ENCODE measurements at regions of chr2 and their contacts with region 1.

Region 1: GRCh38 chr2:135709992-135710391 is 31.7 kb upstream of the UBXN4 start:
- DNase-seq: peak; percentile 68
- CTCF ChIP-seq: peak; percentile 88

Region 2: GRCh38 chr2:135004005-135004746 is 705.8 kb before region 1 on chr2:
- CTCF ChIA-PET with region 1: interaction called, 133 read pairs
- POLR2A ChIA-PET with region 1: no interaction called
- DNase-seq: peak; percentile 82
- CTCF ChIP-seq: peak; percentile 94

Region 3: GRCh38 chr2:135664623-135665068 is 45.3 kb before region 1 on chr2:
- CTCF ChIA-PET with region 1: interaction called, 19 read pairs
- POLR2A ChIA-PET with region 1: no interaction called
- DNase-seq: peak; percentile 24
- CTCF ChIP-seq: no peak

Region 4: DNA sequence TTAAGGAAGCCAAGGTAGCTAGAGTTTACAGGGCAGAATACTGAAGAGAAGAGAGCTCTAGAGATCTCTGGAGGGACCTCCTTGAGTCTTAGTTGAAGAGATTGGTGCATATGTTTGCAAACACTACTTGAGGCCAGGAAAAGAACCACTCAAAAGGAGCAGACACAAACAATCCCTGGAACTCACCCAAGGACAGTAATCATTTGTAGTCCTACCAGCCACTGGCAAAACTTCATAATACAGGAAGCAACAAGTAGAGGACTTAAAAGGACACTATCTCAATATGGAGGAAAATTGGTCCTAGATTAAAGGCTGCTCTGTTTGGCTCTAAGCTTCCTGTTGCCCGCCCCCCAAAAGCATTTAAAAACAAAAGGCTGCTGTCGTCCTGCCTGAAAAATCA is 15.3 kb before region 1 on chr2:
- CTCF ChIA-PET with region 1: interaction called, 30 read pairs
- POLR2A ChIA-PET with region 1: no interaction called
- DNase-seq: no peak
- CTCF ChIP-seq: no peak

Region 5: GRCh38 chr2:135741395-135742324 is 31.7 kb after region 1 on chr2 and contains the start of gene UBXN4:
- CTCF ChIA-PET with region 1: interaction called, 11 read pairs
- POLR2A ChIA-PET with region 1: no interaction called
- DNase-seq: peak; percentile 95
- CTCF ChIP-seq: peak; percentile 35

Measured in GM10248 (cell line).